CD4-positive, alpha-beta memory T cell (primary cell): ENCODE measurements at regions of chr2 and their contacts with region 1.

Region 1: DNA sequence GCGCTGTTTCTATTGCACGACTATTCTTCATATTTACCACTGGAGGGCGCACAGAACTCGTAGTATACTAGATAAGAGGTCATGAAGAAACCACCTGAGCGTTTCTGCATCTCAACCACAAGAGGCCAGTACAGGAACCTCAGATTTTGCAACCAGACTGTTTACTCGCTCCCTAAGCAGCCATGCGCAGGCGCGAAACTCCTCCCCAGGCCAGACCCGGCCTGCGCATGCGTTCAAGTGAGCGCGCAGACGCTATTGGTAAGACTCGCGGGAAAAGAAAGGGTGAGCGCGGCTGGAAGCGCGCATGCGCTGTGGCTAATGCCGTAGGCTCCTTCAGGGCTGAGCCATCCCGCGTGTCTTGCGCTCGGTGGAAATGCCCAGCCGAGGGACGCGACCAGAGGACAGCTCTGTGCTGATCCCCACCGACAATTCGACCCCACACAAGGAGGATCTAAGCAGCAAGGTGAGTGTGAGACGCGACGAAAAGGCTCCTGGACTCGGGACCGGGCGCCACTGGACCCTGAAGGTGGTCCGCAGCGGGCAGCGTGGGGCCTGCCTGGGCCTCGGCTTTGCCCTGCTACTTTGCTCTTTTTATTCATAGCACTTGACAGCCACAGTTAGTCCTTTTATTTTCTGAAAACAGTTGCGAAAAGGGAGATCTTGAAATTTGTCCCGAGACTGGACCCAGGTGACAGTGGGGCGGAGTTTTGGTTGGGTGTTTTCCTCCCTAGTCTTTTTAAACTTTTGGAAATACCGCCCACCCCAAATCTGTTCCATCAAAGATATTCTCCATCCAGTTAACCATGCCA is at the start of gene ASNSD1:
- DNase-seq: peak; percentile 98 to 100 (median 100)
- H3K4me3 ChIP-seq: peak within 1 kb of the TSS; percentile 61 to 85
- H3K4me3 Mint-ChIP-seq: no peak within 1 kb of the TSS
- H3K27ac ChIP-seq: peak within 1 kb of the TSS; percentile 99
- H3K27ac Mint-ChIP-seq: no peak within 1 kb of the TSS
- H3K4me1 ChIP-seq: peaks cover 67% of the 10 kb centered on the region
- H3K4me1 Mint-ChIP-seq: peaks cover 40 to 57% (median 43%) of the 10 kb centered on the region in 4 donors
- H3K27me3 ChIP-seq: no peaks in the 10 kb centered on the region
- H3K27me3 Mint-ChIP-seq: no peaks in the 10 kb centered on the region
- total RNA-seq, gene ASNSD1: 46.9 to 47.0 TPM

Region 2: DNA sequence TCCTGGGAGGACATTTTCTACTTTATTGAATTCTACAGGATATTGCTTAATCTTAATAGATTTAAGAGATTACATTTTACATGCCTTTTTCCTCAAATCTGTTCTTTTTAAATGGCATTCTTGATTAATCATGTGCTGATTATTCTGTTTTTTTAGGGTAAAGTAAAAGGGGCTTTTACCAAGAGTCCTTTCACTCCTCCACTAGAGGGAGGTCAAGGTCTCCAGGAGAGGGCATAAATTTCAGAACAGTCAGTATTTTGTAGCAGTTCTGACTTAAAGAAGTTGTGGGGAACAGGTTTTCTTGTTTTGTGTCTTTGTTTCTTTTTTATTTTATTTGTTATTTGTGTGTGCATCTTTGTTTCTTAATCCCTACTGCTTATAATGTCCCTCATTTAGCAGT is 194.7 kb before region 1 on chr2:
- CTCF ChIA-PET with region 1: no interaction called
- POLR2A ChIA-PET with region 1: no interaction called
- intact Hi-C with region 1: loop called (anchors 1 kb)
- DNase-seq: peak in 4 of 5 donors; percentile 13 to 24 (median 20)
- H3K4me3 ChIP-seq: no peak overlapping the region
- H3K4me3 Mint-ChIP-seq: no peak overlapping the region
- H3K27ac ChIP-seq: no peak overlapping the region
- H3K27ac Mint-ChIP-seq: peak overlapping the region in 2 of 7 donors; percentile 12 to 47
- H3K4me1 ChIP-seq: no peaks in the 10 kb centered on the region
- H3K4me1 Mint-ChIP-seq: no peaks in the 10 kb centered on the region
- H3K27me3 ChIP-seq: no peaks in the 10 kb centered on the region
- H3K27me3 Mint-ChIP-seq: no peaks in the 10 kb centered on the region

Region 3: DNA sequence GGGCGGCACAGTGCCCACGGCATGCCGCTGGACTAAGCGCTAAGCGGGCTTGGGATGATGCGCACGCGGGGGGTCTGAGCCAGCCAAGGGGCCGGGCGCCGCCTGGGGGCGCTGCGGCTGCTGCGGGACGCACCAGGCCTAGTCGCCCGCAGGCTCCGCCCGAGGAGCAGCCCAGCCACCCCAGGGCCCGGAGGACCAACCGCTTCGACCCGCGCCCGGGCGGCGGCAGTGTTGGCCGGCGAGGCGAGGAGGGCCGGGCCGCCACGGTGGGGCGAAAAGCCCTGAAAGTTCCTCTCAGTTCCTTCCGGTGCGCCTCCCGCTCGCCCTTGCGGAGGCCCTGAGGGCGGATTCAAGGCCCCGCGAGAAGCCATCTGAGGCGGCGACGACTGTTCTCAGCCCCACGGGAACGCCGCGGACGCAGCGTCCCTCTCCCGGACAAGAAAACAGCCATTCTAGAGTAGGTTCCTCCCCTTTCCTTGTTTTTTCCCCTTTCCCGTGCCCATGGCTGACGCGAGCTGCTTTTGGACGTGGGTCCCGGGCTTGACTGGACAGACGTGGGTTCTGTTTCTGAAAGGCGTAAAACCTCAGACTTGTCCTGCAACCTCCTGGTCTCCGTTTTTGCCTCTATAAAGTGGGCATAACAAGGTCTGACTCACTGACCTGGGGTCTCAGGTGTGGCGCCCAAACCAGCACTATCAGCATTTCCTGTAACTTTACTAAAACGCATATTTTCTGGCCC is 13.2 kb after region 1 on chr2 and contains the start of gene ANKAR:
- CTCF ChIA-PET with region 1: interaction called, 171 read pairs
- POLR2A ChIA-PET with region 1: interaction called, 48 read pairs
- intact Hi-C with region 1: loop called (anchors 1 kb)
- DNase-seq: peak; percentile 80 to 86 (median 83)
- H3K4me3 ChIP-seq: peak within 1 kb of the TSS; percentile 42 to 77
- H3K4me3 Mint-ChIP-seq: peak within 1 kb of the TSS; percentile 95 to 98 (median 96)
- H3K27ac ChIP-seq: peak within 1 kb of the TSS; percentile 90
- H3K27ac Mint-ChIP-seq: peak within 1 kb of the TSS; percentile 96 to 99 (median 99)
- H3K4me1 ChIP-seq: peaks cover 21% of the 10 kb centered on the region
- H3K4me1 Mint-ChIP-seq: peaks cover 27 to 49% (median 40%) of the 10 kb centered on the region in 4 donors
- H3K27me3 ChIP-seq: no peaks in the 10 kb centered on the region
- H3K27me3 Mint-ChIP-seq: no peaks in the 10 kb centered on the region
- total RNA-seq, gene ANKAR: 18.4 to 20.2 TPM

Region 4: GRCh38 chr2:189762551-189763298 is 101.4 kb after region 1 on chr2 and contains the start of gene OSGEPL1:
- CTCF ChIA-PET with region 1: interaction called, 64 read pairs
- POLR2A ChIA-PET with region 1: interaction called, 37 read pairs
- intact Hi-C with region 1: loop called (anchors 1 kb)
- DNase-seq: peak; percentile 89 to 98 (median 91)
- H3K4me3 ChIP-seq: peak within 1 kb of the TSS; percentile 87 to 94
- H3K4me3 Mint-ChIP-seq: peak within 1 kb of the TSS; percentile 90 to 99 (median 95)
- H3K27ac ChIP-seq: peak within 1 kb of the TSS; percentile 88
- H3K27ac Mint-ChIP-seq: peak within 1 kb of the TSS; percentile 95 to 99 (median 97)
- H3K4me1 ChIP-seq: peaks cover 13% of the 10 kb centered on the region
- H3K4me1 Mint-ChIP-seq: peaks cover 4 to 15% (median 5%) of the 10 kb centered on the region in 4 donors
- H3K27me3 ChIP-seq: no peaks in the 10 kb centered on the region
- H3K27me3 Mint-ChIP-seq: no peaks in the 10 kb centered on the region
- total RNA-seq, gene OSGEPL1: 19.1 TPM

Region 5: DNA sequence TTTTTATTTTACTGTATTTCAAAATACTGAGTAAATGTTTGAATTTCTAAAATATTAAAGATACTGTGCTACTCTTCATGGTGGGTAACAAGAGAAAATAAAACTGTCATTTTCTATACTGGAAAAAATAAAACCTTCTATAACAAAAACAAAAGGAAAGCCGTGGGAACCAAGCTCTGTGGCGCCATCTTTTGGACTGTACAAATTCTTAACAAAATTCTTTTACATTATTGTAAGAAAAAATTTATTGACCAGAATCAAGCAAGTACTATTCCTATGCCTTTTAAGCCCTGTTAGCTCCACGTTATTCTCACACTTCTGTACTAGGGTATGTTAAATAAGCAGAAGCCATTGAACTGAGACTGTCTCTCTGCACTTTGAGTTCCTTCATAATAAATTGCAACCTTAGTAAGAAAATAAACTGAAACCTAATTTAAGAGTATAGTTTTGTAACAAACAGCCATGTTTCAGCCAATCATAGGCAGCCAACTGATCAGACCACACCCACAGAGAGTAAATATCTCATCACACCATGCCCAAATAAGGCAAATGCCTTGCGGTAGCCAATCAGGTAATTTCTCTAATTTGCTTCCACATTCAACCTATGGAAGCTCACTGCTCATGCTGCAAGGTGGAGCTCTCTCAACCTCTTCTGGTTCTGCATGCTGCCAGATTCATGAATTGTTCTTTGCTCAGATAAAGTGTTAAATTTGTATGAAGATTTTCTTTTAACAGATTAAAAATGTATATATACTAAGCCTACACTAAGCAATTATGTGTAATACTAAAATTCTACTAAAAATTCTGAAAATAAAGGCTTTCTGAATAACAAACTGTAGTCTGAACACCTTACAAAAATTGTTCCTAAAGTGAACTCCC is 616.1 kb after region 1 on chr2:
- CTCF ChIA-PET with region 1: interaction called, 4 read pairs
- POLR2A ChIA-PET with region 1: no interaction called
- intact Hi-C with region 1: loop called (anchors 1 kb)
- DNase-seq: peak in 3 of 5 donors; percentile 2 to 9 (median 6)
- H3K4me3 ChIP-seq: no peak overlapping the region
- H3K4me3 Mint-ChIP-seq: no peak overlapping the region
- H3K27ac ChIP-seq: no peak overlapping the region
- H3K27ac Mint-ChIP-seq: no peak overlapping the region
- H3K4me1 ChIP-seq: no peaks in the 10 kb centered on the region
- H3K4me1 Mint-ChIP-seq: peaks cover 0 to 3% (median 0%) of the 10 kb centered on the region in 4 donors
- H3K27me3 ChIP-seq: no peaks in the 10 kb centered on the region
- H3K27me3 Mint-ChIP-seq: no peaks in the 10 kb centered on the region

Region 6: DNA sequence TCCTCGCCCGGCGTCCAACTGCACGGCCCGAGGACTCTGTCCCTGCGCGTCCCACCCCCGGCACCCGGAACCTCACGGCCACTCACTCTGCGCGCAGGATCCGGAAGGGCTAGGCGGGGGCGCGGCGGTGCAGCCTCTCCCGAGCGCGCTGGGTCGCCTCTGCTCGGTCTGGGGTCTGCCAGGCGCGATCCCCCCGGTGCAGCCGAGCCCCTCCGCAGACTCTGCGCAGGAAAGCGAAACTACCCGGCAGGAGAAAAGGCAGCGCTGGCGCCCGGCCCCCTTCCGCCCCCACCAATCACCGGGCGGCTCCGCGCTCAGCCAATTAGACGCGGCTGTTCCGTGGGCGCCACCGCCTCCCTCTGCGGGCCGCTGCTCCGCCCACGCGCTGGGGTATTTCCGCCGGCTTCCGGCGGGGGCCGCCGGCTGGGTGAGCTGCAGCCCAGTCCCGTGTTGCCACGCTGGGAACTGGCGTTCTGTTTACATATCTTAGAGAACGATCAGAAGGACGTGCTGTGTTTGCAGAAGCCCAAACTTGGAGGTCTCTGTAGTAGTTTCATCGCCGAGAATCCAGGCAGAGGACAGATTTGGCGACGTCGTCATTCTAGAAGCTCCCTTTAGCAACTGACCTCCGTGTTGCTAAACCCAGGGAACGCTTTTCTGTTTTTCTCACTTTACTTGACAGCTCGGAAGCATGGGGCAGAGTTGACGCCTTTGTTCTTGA is 1352.7 kb after region 1 on chr2 and contains the start of gene STAT1:
- CTCF ChIA-PET with region 1: no interaction called
- POLR2A ChIA-PET with region 1: no interaction called
- intact Hi-C with region 1: loop called (anchors 10 kb)
- DNase-seq: peak; percentile 94 to 98 (median 96)
- H3K4me3 ChIP-seq: peak within 1 kb of the TSS; percentile 92 to 95
- H3K4me3 Mint-ChIP-seq: no peak within 1 kb of the TSS
- H3K27ac ChIP-seq: peak within 1 kb of the TSS; percentile 89
- H3K27ac Mint-ChIP-seq: no peak within 1 kb of the TSS
- H3K4me1 ChIP-seq: peaks cover 71% of the 10 kb centered on the region
- H3K4me1 Mint-ChIP-seq: peaks cover 29 to 48% (median 33%) of the 10 kb centered on the region in 4 donors
- H3K27me3 ChIP-seq: no peaks in the 10 kb centered on the region
- H3K27me3 Mint-ChIP-seq: no peaks in the 10 kb centered on the region
- total RNA-seq, gene STAT1: 130 TPM